ENCODE measurements at regions of chr7 and their contacts with region 1.

Region 1: GRCh38 chr7:33904681-33905388 is 504 bp upstream of the BMPER start:
- DNase-seq: peak; percentile 59
- ATAC-seq: peak; percentile 82
- H3K4me3 ChIP-seq: peak overlapping the region; percentile 70
- H3K27ac ChIP-seq: peak overlapping the region; percentile 74
- H3K4me1 ChIP-seq: peaks cover 4% of the 10 kb centered on the region; the same call in 1 of the 2 replicates
- H3K27me3 ChIP-seq: no peaks in the 10 kb centered on the region
- CTCF ChIP-seq: peak; percentile 36
- POLR2A ChIP-seq: no peak
- RAD21 ChIP-seq: no peak

Region 2: DNA sequence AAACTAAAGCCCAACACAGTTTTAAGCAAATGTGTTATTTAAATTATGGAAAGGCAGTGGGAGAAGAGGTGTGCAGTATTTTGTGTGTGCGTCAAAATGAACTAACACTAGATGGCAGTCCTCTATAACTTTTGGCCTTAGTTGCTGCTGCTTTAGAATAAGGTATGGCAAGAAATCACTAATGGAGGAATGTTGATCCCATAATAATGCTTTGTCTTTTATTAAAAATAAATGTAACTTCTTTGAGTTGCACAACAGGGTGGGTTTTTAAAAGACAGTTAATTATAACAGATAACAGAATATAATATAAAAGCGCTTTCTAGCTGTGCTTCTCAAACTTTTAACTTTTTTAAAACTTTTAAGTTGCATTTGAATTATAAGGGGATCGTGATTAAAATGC is 719.0 kb before region 1 on chr7:
- CTCF ChIA-PET with region 1: no interaction called
- POLR2A ChIA-PET with region 1: no interaction called
- dilution Hi-C with region 1: no loop called
- in situ Hi-C with region 1: no loop called
- intact Hi-C with region 1: loop called (anchors 5 kb)
- DNase-seq: peak; percentile 68
- ATAC-seq: peak; percentile 97
- H3K4me3 ChIP-seq: no peak overlapping the region
- H3K27ac ChIP-seq: no peak overlapping the region
- H3K4me1 ChIP-seq: no peaks in the 10 kb centered on the region
- H3K27me3 ChIP-seq: no peaks in the 10 kb centered on the region
- CTCF ChIP-seq: peak; percentile 80
- POLR2A ChIP-seq: no peak
- RAD21 ChIP-seq: peak; percentile 85

Region 3: GRCh38 chr7:33423646-33424020 is 481.2 kb before region 1 on chr7:
- CTCF ChIA-PET with region 1: no interaction called
- POLR2A ChIA-PET with region 1: no interaction called
- dilution Hi-C with region 1: no loop called
- in situ Hi-C with region 1: no loop called
- intact Hi-C with region 1: loop called (anchors 5 kb)
- DNase-seq: no peak
- ATAC-seq: no peak
- H3K4me3 ChIP-seq: no peak overlapping the region
- H3K27ac ChIP-seq: no peak overlapping the region
- H3K4me1 ChIP-seq: peaks cover 7% of the 10 kb centered on the region; the same call in 1 of the 2 replicates
- H3K27me3 ChIP-seq: peaks cover 13% of the 10 kb centered on the region
- CTCF ChIP-seq: peak; percentile 26; the same call in 1 of the 2 replicates
- POLR2A ChIP-seq: no peak
- RAD21 ChIP-seq: peak; percentile 36

Region 4: GRCh38 chr7:33757562-33758165 is 147.2 kb before region 1 on chr7:
- CTCF ChIA-PET with region 1: interaction called, 5 read pairs
- POLR2A ChIA-PET with region 1: no interaction called
- dilution Hi-C with region 1: no loop called
- in situ Hi-C with region 1: no loop called
- intact Hi-C with region 1: loop called (anchors 5 kb)
- DNase-seq: peak; percentile 47
- ATAC-seq: no peak
- H3K4me3 ChIP-seq: no peak overlapping the region
- H3K27ac ChIP-seq: no peak overlapping the region
- H3K4me1 ChIP-seq: peaks cover 9% of the 10 kb centered on the region
- H3K27me3 ChIP-seq: no peaks in the 10 kb centered on the region
- CTCF ChIP-seq: peak; percentile 58
- POLR2A ChIP-seq: no peak
- RAD21 ChIP-seq: peak; percentile 64

Region 5: DNA sequence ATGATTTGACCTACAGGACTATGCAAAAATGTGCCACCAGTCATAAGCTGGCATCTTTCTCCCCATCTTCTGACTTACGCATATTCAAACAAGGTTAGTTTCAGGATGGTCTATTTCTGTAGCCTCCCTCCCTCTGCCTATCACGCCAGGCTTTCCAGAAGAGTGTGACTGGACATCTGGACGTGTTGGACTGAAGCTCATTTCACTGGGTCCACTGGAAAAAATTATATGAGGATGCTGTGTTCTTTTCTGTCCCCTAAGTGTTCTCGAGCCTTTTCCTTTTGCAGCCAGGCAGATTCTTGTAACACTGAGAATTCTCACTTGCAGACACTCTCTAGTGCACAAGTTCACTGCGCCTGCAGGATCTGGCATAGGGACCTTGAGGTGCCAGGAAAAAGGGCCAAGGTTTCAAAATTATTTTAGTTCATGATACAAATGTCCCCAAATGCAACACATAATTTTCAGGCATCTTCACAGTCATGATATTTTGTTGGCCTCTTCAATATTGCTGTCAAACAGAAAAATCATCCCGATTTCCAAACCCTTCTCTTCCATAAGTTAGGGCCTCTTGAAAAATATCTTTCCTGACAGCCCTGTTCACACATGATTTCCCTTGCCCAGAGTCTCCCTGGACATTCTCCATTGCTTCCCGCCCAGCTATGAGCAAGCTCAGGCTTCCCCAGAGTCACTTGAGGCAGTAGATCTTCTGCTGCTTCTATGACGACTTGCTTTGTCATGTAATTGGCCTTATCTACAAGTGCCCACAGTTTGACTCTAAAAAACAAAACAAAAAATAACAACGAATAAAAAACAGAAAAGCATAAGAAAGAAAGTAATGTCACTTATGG is 170.9 kb after region 1 on chr7:
- CTCF ChIA-PET with region 1: no interaction called
- POLR2A ChIA-PET with region 1: no interaction called
- dilution Hi-C with region 1: no loop called
- in situ Hi-C with region 1: no loop called
- intact Hi-C with region 1: loop called (anchors 5 kb)
- DNase-seq: no peak
- ATAC-seq: no peak
- H3K4me3 ChIP-seq: no peak overlapping the region
- H3K27ac ChIP-seq: no peak overlapping the region
- H3K4me1 ChIP-seq: peaks cover 4% of the 10 kb centered on the region
- H3K27me3 ChIP-seq: no peaks in the 10 kb centered on the region
- CTCF ChIP-seq: no peak
- POLR2A ChIP-seq: no peak
- RAD21 ChIP-seq: no peak

Region 6: DNA sequence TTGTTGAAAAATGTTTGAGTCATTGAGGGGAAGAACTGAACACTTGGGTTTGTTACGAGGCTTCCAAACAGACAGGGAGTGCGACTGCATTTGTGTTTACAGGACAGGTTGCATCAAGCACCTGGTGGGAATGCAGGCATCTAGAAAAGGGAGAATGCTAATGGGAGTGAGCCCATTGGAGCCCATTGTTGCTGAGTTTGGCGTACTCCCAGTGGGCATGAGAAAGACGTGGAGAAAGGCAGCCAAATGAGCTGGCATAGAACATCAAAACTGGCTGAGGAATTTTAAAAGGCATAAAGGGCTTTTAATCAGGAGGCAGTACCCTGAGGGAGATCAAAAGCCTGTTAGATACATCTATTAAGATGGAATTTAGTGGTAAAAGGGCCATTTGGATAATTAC is 581.5 kb after region 1 on chr7:
- CTCF ChIA-PET with region 1: no interaction called
- POLR2A ChIA-PET with region 1: no interaction called
- dilution Hi-C with region 1: no loop called
- in situ Hi-C with region 1: no loop called
- intact Hi-C with region 1: no loop called
- DNase-seq: no peak
- ATAC-seq: no peak
- H3K4me3 ChIP-seq: no peak overlapping the region
- H3K27ac ChIP-seq: no peak overlapping the region
- H3K4me1 ChIP-seq: no peaks in the 10 kb centered on the region
- H3K27me3 ChIP-seq: no peaks in the 10 kb centered on the region
- CTCF ChIP-seq: no peak
- POLR2A ChIP-seq: no peak
- RAD21 ChIP-seq: no peak